Activated naive CD8-positive, alpha-beta T cell treated with anti-CD3 and anti-CD28 coated beads, Interleukin-2, amount 10 ng/mL, durations not matched to agents 7 days and 5 days (primary cell): ENCODE measurements at regions of chr2 and their contacts with region 1.

Region 1: DNA sequence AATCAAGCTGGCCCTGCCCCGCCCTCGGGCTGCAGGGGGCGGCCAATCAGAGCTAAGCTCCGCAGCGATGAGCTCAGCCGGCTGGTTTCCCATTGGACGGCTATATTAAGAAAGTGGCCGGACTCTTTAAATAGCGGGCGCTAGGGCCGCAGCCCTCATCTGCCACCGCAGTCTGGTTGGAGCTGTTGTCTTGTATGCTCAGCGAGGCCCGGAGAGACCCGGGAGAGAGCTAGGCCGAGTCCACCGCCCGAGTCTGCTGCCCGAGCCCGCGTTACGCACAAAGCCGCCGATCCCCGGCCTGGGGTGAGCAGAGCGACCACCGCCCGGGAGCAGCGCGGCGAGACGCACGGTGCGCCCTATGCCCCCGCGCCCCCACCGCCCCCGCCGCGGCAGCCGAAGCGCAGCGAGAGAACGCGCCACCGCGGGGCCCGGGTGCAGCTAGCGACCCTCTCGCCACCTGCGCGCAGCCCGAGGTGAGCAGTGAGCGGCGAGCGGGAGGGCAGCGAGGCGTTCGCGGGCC is at the start of gene RHOB:
- DNase-seq: peak; percentile 87
- ATAC-seq: peak; percentile 98
- H3K4me3 Mint-ChIP-seq: peak within 1 kb of the TSS; percentile 73
- H3K27ac Mint-ChIP-seq: no peak within 1 kb of the TSS
- H3K4me1 Mint-ChIP-seq: peaks cover 3% of the 10 kb centered on the region
- H3K27me3 Mint-ChIP-seq: peaks cover 62% of the 10 kb centered on the region
- total RNA-seq, gene RHOB: 12.1 to 12.7 TPM

Region 2: GRCh38 chr2:20457653-20458630 is 11.0 kb after region 1 on chr2:
- POLR2A ChIA-PET with region 1: no interaction called
- DNase-seq: no peak
- ATAC-seq: no peak
- H3K4me3 Mint-ChIP-seq: no peak overlapping the region
- H3K27ac Mint-ChIP-seq: no peak overlapping the region
- H3K4me1 Mint-ChIP-seq: no peaks in the 10 kb centered on the region
- H3K27me3 Mint-ChIP-seq: peaks cover 33% of the 10 kb centered on the region

Region 3: GRCh38 chr2:20650880-20651730 is 204.1 kb after region 1 on chr2 and contains the start of gene HS1BP3:
- POLR2A ChIA-PET with region 1: interaction called, 10 read pairs
- DNase-seq: peak; percentile 99
- ATAC-seq: peak; percentile 94
- H3K4me3 Mint-ChIP-seq: peak within 1 kb of the TSS; percentile 93
- H3K27ac Mint-ChIP-seq: peak within 1 kb of the TSS; percentile 94
- H3K4me1 Mint-ChIP-seq: peaks cover 11% of the 10 kb centered on the region
- H3K27me3 Mint-ChIP-seq: peaks cover 9% of the 10 kb centered on the region
- total RNA-seq, gene HS1BP3: 13.8 to 14.8 TPM